Right cardiac atrium (tissue), 5 donors: ENCODE measurements at regions of chr17 and their contacts with region 1.

Region 1: GRCh38 chr17:2054512-2055291 is at the start of gene HIC1:
- DNase-seq: peak; percentile 85 to 95 (median 93)
- ATAC-seq: peak; percentile 67 to 68
- H3K4me3 ChIP-seq: peak within 1 kb of the TSS; percentile 81
- H3K27ac ChIP-seq: peak within 1 kb of the TSS; percentile 69
- H3K4me1 ChIP-seq: no peaks in the 10 kb centered on the region
- H3K27me3 ChIP-seq: no peaks in the 10 kb centered on the region
- total RNA-seq, gene HIC1: 16.9 to 33.0 (median 24.7) TPM

Region 2: GRCh38 chr17:2102931-2103809 is 48.5 kb after region 1 on chr17:
- intact Hi-C with region 1: no loop called
- DNase-seq: no peak
- ATAC-seq: peak in 1 of 2 donors; percentile 57
- H3K4me3 ChIP-seq: no peak overlapping the region
- H3K27ac ChIP-seq: no peak overlapping the region
- H3K4me1 ChIP-seq: peaks cover 16% of the 10 kb centered on the region
- H3K27me3 ChIP-seq: no peaks in the 10 kb centered on the region

Region 3: GRCh38 chr17:2244545-2245525 is 190.1 kb after region 1 on chr17:
- intact Hi-C with region 1: loop called in 3 of 4 experiments (anchors 2 to 5 kb)
- DNase-seq: peak; percentile 89 to 95 (median 95)
- ATAC-seq: peak; percentile 90 to 91
- H3K4me3 ChIP-seq: no peak overlapping the region
- H3K27ac ChIP-seq: peak overlapping the region; percentile 26
- H3K4me1 ChIP-seq: no peaks in the 10 kb centered on the region
- H3K27me3 ChIP-seq: no peaks in the 10 kb centered on the region